Activated CD4-positive, alpha-beta memory T cell treated with anti-CD3 and anti-CD28 coated beads for 36 hours (primary cell): ENCODE measurements at regions of chr5 and their contacts with region 1.

Region 1: DNA sequence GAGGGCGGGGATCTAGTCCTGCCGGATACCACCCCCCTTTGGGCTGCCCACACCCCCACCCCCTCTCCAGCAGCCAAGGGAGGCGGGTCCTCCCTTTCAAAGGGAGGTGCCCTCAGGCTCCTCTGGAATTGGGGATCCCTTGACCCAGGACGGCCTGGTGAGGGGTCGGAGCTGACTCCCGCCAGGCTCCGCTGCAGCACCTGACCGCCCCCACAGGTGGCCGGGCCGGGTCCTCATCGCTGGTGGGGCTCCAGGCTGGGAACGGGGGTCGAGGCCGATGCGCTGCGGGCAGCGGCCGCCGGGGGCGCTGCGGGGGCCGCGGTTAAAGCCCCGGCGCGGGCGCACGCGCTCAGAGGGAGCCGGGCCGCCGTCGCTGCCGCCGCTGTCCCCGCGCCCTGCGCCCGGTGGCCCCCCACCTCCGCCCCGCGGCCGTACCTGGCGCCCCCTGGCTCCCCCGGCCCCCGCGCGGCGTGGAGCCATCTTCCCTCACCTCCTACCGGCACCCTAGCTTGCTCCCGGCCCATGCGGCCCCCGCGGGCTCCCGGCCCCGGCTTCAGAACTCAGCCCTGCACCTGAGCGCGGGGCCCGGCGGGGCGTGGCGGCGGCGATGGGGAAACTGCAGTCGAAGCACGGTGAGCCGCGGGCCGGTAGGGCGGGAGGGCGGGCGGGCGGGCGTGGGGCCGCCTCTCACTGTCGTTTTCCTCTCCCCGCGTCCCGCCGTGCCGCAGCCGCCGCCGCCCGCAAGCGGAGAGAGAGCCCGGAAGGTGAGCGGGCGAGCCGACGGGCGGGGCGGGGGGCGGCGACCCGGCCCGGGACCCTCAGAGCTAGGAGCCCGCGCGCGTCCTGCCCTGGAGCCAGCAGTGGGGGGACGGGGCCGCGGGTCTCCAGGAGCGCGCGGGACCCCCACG is at the start of gene NKD2:
- DNase-seq: peak; percentile 42
- H3K4me3 Mint-ChIP-seq: peak within 1 kb of the TSS; percentile 47
- H3K27ac Mint-ChIP-seq: no peak within 1 kb of the TSS
- H3K4me1 Mint-ChIP-seq: peaks cover 13% of the 10 kb centered on the region
- H3K27me3 Mint-ChIP-seq: peaks cover 53% of the 10 kb centered on the region
- total RNA-seq, gene NKD2: 0.41 to 1.1 TPM

Region 2: DNA sequence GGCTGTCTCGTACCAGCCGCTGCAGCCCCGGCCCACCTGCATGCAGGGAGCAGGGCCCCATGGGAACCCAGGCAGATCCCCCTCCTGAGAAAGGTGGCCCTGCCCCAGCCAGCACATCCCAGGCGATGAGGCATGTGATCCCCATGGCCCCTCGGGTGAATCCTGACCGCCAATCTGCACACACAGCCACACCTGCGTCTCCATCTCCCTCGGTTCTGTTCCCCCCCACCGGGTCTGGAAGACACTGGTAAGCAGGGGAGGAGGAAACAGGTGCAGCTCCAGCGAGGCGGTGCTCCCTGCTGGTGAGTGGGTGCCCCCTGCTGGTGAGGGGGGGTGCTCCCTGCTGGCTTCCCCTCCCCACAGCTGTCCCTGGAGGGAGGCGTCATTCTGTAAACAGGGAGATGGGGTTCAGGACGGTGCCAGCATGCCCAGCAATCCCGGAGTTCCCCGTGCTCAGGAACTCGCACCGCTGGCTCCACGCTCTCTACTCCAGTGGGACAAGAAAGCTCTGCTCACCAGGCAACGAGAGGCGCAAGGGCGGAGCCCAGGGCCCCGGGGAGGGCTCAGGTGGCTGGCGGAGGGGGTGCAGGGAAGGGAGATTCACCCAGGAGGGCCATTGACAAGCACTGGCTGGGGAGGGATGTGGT is 131.6 kb after region 1 on chr5:
- CTCF ChIA-PET with region 1: interaction called, 3 read pairs
- POLR2A ChIA-PET with region 1: no interaction called
- intact Hi-C with region 1: loop called (anchors 1 kb)
- DNase-seq: peak; percentile 77
- H3K4me3 Mint-ChIP-seq: no peak overlapping the region
- H3K27ac Mint-ChIP-seq: no peak overlapping the region
- H3K4me1 Mint-ChIP-seq: peaks cover 2% of the 10 kb centered on the region
- H3K27me3 Mint-ChIP-seq: peaks cover 4% of the 10 kb centered on the region